Calu3 (cell line): ENCODE measurements at regions of chr2 and their contacts with region 1.

Region 1: GRCh38 chr2:67650291-67651133 is 253.4 kb downstream of the ETAA1 start:
- DNase-seq: peak; percentile 85
- H3K4me3 Mint-ChIP-seq: peak overlapping the region; percentile 6
- H3K27ac Mint-ChIP-seq: peak overlapping the region; percentile 59
- H3K4me1 Mint-ChIP-seq: peaks cover 45% of the 10 kb centered on the region
- H3K27me3 Mint-ChIP-seq: no peaks in the 10 kb centered on the region
- CTCF ChIP-seq: peak; percentile 72

Region 2: DNA sequence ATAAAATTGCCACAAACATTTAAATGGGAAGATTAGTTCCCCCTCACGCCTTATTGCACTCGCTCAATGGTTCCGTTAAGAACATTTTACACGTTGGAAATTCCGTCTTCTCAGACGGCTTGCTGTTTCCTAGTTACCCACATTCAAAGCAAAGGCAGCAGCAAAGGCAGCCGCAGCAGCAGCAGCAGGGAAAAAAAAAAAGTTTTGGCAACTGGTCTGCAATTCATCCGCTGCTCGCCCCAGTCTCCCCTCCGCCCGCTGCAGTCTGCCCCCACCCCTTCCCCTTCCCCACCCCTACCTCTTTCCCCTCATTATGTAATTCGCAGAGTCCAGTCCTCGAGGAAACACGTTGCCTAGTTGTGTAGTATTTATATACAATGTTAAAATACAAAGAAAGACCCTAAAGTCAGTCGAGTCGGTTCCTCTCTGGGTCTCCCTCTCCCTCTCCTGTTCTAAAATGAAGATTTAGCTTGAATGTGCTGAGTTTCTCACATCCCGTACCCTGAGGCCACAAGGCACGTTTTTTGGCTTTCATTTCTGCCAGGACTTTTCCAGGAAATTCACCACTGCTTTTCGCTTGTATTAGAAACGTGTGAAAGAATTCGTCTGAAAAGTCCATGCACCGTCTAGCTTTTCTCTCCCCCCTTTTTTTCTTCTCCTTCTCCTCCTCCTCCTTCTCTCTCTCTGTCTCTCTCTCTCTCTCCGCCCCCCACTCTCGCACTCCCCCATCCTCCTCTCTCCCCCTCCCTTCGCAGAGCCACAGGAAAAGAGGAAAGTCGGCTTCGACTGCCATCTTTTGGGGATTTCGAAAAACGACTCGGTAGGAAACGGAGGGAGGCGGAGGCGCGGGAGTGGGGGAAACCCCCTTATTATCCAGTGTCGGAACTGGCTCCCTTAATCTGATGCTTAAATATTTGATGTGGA is 1075.5 kb before region 1 on chr2:
- CTCF ChIA-PET with region 1: no interaction called
- intact Hi-C with region 1: loop called (anchors 5 kb)
- DNase-seq: peak; percentile 59
- H3K4me3 Mint-ChIP-seq: peak overlapping the region; percentile 72
- H3K27ac Mint-ChIP-seq: peak overlapping the region; percentile 55
- H3K4me1 Mint-ChIP-seq: peaks cover 26% of the 10 kb centered on the region
- H3K27me3 Mint-ChIP-seq: peaks cover 22% of the 10 kb centered on the region
- CTCF ChIP-seq: peak; percentile 18

Region 3: GRCh38 chr2:67234439-67234838 is 416.1 kb before region 1 on chr2:
- CTCF ChIA-PET with region 1: interaction called, 7 read pairs
- intact Hi-C with region 1: loop called (anchors 5 kb)
- DNase-seq: peak; percentile 22
- H3K4me3 Mint-ChIP-seq: no peak overlapping the region
- H3K27ac Mint-ChIP-seq: no peak overlapping the region
- H3K4me1 Mint-ChIP-seq: peaks cover 33% of the 10 kb centered on the region
- H3K27me3 Mint-ChIP-seq: no peaks in the 10 kb centered on the region
- CTCF ChIP-seq: peak; percentile 28

Region 4: DNA sequence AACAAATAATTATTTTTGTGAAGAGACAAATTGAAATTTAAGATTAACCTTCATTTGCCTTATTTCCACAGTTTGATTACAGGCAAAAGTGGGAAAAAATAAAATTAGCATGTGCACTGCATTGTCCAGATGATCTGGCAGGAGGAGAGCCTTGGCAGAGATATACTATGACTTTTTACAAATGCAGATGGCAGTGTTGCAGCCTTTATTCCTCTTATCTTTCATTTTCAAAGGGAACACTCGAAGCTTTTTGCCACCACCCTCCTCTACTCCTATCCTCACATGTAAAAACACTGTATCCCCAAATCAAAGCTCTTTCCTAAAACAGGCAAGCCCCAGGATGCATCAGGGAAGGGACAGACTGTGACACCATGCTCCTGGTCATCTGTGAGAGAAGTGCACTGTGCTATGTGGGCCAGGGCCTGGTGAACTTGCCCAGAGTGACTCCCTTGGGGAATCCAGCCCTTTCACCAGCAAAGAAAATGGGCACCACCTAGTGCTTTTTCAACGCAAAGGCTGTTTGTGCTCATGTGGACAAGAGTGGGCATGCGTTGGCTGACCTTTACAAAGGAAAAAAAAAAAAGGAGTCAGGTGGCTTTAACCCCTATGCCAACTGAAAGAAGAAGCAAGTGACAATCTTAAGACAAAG is 328.0 kb before region 1 on chr2:
- CTCF ChIA-PET with region 1: no interaction called
- intact Hi-C with region 1: loop called (anchors 2 kb)
- DNase-seq: peak; percentile 73
- H3K4me3 Mint-ChIP-seq: peak overlapping the region; percentile 12
- H3K27ac Mint-ChIP-seq: peak overlapping the region; percentile 87
- H3K4me1 Mint-ChIP-seq: peaks cover 29% of the 10 kb centered on the region
- H3K27me3 Mint-ChIP-seq: no peaks in the 10 kb centered on the region
- CTCF ChIP-seq: peak; percentile 71

Region 5: GRCh38 chr2:67476809-67477790 is 173.4 kb before region 1 on chr2:
- CTCF ChIA-PET with region 1: interaction called, 4 read pairs
- intact Hi-C with region 1: loop called (anchors 2 kb)
- DNase-seq: peak; percentile 6
- H3K4me3 Mint-ChIP-seq: no peak overlapping the region
- H3K27ac Mint-ChIP-seq: no peak overlapping the region
- H3K4me1 Mint-ChIP-seq: no peaks in the 10 kb centered on the region
- H3K27me3 Mint-ChIP-seq: no peaks in the 10 kb centered on the region
- CTCF ChIP-seq: peak; percentile 67

Region 6: GRCh38 chr2:67840460-67841068 is 190.1 kb after region 1 on chr2:
- CTCF ChIA-PET with region 1: no interaction called
- intact Hi-C with region 1: loop called (anchors 2 kb)
- DNase-seq: peak; percentile 82
- H3K4me3 Mint-ChIP-seq: no peak overlapping the region
- H3K27ac Mint-ChIP-seq: no peak overlapping the region
- H3K4me1 Mint-ChIP-seq: peaks cover 11% of the 10 kb centered on the region
- H3K27me3 Mint-ChIP-seq: no peaks in the 10 kb centered on the region
- CTCF ChIP-seq: peak; percentile 63